Astrocyte of the cerebellum (primary cell): ENCODE measurements at regions of chr3 and their contacts with region 1.

Region 1: GRCh38 chr3:79361748-79362378 is 405.9 kb downstream of the ROBO1 start:
- DNase-seq: peak; percentile 41
- H3K4me3 ChIP-seq: no peak overlapping the region
- CTCF ChIP-seq: peak; percentile 69

Region 2: DNA sequence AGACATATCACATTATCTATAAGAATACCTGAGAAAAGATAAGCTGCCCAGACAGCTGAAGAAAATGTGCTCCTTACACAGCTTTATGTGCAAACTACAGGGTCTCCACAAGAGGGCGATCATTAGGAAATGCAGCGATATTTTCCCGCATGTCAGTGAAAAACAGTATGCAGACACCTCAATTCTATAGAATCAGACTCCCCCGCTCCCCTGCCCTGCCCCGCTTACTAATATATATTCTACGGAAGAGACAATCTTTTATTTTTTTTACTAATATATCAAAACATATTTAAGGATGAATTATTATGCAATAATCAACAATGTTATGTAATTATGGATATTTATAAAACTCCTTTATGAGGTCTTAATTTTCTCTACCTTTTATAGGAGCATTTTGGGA is 275.3 kb before region 1 on chr3:
- in situ Hi-C with region 1: loop called (anchors 25 kb)
- DNase-seq: peak; percentile 43
- H3K4me3 ChIP-seq: no peak overlapping the region
- CTCF ChIP-seq: peak; percentile 84

Region 3: GRCh38 chr3:79258479-79258878 is 103.4 kb before region 1 on chr3:
- in situ Hi-C with region 1: no loop called
- DNase-seq: no peak
- H3K4me3 ChIP-seq: no peak overlapping the region
- CTCF ChIP-seq: no peak